HepG2 (cell line): ENCODE measurements at regions of chr10 and their contacts with region 1.

Region 1: DNA sequence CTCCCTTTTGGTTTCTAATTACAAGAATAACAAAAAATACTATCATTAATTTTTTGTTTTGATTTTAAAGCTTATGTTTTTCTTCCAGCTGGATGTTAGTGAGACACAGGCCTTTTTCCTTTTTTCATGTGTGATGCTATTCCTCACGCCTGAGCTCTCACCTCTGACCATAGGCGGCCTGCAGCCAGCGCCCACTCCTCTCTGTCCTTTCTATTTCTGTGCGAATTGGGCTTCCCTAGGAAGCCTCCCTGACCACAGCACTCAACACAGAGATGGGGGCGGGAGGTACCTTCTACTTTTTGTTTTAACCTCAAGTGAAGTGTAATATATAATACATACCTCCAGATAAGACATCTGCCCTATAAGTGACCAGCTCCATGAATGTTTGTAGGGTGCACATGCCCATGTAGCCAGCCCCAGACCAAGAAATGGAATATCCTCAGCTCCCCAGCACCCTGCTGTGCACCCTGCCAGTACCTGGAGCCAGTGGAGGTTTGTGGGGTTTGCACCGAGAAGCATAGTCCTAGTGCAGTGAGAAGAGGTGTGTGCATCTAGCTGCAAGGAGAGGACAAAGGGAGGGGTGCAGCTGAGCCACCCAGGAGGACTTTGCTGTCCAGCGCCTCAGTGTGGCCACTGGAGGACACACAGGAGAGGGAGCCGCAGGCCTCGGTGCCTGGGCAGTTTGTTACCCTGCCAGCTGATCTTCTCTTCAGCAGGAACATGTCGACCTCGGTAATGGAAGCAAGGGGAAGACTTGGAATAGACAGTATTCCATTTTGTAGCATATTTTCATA is 38.5 kb downstream of the BNIP3 start:
- DNase-seq: peak; percentile 15
- ATAC-seq: peak; percentile 96
- H3K4me3 ChIP-seq: no peak overlapping the region
- H3K27ac ChIP-seq: no peak overlapping the region
- H3K4me1 ChIP-seq: peaks cover 1% of the 10 kb centered on the region
- H3K27me3 ChIP-seq: no peaks in the 10 kb centered on the region
- CTCF ChIP-seq: peak; percentile 59
- EP300 ChIP-seq: no peak
- POLR2A ChIP-seq: no peak
- RAD21 ChIP-seq: 0 out of 2 replicates have a peak, but pooled peaks have one; percentile 34

Region 2: DNA sequence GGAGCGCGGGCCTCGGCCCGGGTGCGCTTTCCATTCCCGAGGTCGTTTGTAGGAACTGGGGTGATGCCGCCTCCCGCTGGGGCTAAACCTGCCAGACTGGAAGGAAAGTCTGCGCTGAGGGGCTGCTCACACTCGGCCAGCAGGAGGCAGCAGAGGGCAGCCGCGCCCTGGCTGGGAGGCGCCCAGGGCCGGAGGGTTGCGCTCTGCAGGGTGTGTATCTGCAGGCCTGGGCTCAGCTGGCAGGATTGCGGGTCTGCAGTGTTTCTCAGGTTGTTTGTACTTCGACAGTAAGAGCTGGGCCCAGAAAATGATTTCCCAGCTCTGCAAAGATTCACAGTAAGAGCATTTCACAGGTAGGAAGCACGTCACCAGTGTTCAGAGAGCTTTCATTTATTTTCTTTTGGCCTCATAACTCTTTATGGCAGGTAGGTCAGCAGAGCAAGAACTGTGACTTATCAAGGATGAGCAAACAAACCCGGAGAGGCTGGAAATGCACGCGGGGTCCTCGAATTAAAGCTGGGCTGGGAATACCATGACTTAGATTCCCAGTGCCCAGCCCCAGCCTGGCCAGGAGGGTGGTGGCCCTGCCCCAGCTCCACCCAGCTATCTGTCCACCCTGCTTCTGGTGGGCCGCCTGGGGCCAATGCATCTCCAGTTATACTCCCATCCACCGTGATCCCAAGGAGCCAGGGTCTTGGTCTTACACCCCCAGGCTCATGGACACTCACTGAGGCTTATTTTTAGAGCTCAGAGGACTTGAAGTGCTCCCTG is 57.6 kb before region 1 on chr10:
- CTCF ChIA-PET with region 1: interaction called, 8 read pairs
- POLR2A ChIA-PET with region 1: no interaction called
- in situ Hi-C with region 1: no loop called
- intact Hi-C with region 1: loop called (anchors 1 kb)
- DNase-seq: peak; percentile 53
- ATAC-seq: peak; percentile 98
- H3K4me3 ChIP-seq: no peak overlapping the region; a peak in 1 of 6 replicates
- H3K27ac ChIP-seq: no peak overlapping the region
- H3K4me1 ChIP-seq: peaks cover 22% of the 10 kb centered on the region
- H3K27me3 ChIP-seq: peaks cover 0 to 2% of the 10 kb centered on the region in 2 experiments; a peak in 1 of 5 replicates
- CTCF ChIP-seq: peak; percentile 99
- EP300 ChIP-seq: no peak
- POLR2A ChIP-seq: no peak
- RAD21 ChIP-seq: peak; percentile 92